Endothelial cell of umbilical vein (primary cell): ENCODE measurements at regions of chr9 and their contacts with region 1.

Region 1: DNA sequence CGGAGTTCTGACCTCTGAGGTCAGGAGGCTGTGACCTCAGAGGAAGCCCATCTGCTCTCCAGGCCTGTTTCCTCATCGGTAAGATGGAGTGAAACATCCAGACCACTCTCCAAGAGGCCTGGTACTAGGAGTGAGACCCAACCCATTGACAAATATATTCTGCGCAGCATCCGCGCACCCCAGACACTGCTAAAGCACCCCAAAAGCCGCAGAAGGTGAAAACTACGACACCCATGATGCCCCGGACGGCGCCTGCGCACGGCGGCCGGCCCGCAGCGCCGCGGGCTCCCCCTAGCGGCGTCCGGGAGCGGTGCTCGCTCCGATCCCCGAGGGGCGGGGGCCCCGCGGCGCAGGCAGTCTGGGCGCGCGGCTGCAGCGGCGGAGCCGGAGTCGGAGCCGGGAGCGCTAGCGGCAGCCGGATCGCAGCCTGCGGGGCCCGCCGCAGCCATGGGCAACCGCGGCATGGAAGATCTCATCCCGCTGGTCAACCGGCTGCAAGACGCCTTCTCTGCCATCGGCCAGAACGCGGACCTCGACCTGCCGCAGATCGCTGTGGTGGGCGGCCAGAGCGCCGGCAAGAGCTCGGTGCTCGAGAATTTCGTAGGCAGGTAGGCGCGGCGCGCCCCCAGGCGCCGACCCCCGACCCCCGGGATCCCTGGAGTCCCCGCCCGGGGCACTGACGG is at the start of gene DNM1:
- DNase-seq: peak; percentile 51
- H3K4me3 ChIP-seq: peak within 1 kb of the TSS; percentile 24 to 39 (median 32)
- H3K27ac ChIP-seq: no peak within 1 kb of the TSS
- H3K4me1 ChIP-seq: peaks cover 10% of the 10 kb centered on the region
- H3K27me3 ChIP-seq: peaks cover 9 to 10% of the 10 kb centered on the region in 2 experiments
- CTCF ChIP-seq: peak; percentile 74 to 99
- POLR2A ChIP-seq: no peak
- total RNA-seq, gene DNM1: 2.9 and 7.9 TPM in 2 replicates

Region 2: DNA sequence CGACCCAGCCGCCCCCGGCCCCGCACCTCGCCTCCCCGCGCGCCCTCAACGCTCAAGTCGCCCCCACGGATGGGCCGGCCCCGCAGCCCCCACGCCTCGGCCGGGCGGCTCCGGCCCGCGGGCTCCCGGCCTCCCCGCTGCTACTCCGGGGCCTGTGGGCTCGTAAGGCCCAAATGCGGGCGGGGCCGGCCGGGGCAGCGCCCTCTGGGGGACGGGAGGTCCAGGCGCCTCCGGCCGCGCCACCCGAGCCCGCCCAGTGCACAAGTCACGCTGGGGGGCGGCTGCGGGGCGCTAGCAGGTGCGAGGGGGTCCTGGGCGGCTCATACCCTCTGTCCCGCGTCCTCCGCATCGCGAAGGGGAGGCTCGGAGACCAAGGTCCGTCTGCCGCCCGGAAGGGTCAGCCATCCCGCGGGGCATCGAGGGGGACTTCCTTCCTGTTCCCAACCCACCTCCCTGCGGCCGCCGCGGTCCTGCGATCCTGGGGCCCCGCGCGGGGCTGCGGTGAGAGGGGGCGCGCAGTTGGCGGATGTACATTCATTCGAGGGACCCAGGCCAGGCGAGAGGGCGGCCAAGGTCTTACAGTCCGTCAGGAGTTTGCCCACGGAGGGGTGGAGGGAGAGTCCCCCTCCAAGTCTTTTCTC is 11.6 kb before region 1 on chr9 and contains the start of gene CIZ1:
- CTCF ChIA-PET with region 1: interaction called, 14 read pairs
- POLR2A ChIA-PET with region 1: no interaction called
- dilution Hi-C with region 1: no loop called
- intact Hi-C with region 1: loop called (anchors 1 kb)
- DNase-seq: peak; percentile 76
- H3K4me3 ChIP-seq: peak within 1 kb of the TSS; percentile 70 to 89 (median 76)
- H3K27ac ChIP-seq: peak within 1 kb of the TSS; percentile 37
- H3K4me1 ChIP-seq: peaks cover 11% of the 10 kb centered on the region
- H3K27me3 ChIP-seq: no peaks in the 10 kb centered on the region
- CTCF ChIP-seq: peak; percentile 74 to 86
- POLR2A ChIP-seq: peak; percentile 49
- total RNA-seq, gene CIZ1: 143 and 150 TPM in 2 replicates

Region 3: GRCh38 chr9:128218518-128219389 is 15.6 kb after region 1 on chr9:
- CTCF ChIA-PET with region 1: interaction called, 10 read pairs
- POLR2A ChIA-PET with region 1: interaction called, 3 read pairs
- dilution Hi-C with region 1: no loop called
- intact Hi-C with region 1: loop called (anchors 2 kb)
- DNase-seq: peak; percentile 90
- H3K4me3 ChIP-seq: peak overlapping the region in 1 of 3 experiments; percentile 8
- H3K27ac ChIP-seq: no peak overlapping the region
- H3K4me1 ChIP-seq: peaks cover 3% of the 10 kb centered on the region
- H3K27me3 ChIP-seq: peaks cover 0 to under 1% of the 10 kb centered on the region in 2 experiments
- CTCF ChIP-seq: peak in 1 of 2 donors; percentile 1
- POLR2A ChIP-seq: no peak

Region 4: DNA sequence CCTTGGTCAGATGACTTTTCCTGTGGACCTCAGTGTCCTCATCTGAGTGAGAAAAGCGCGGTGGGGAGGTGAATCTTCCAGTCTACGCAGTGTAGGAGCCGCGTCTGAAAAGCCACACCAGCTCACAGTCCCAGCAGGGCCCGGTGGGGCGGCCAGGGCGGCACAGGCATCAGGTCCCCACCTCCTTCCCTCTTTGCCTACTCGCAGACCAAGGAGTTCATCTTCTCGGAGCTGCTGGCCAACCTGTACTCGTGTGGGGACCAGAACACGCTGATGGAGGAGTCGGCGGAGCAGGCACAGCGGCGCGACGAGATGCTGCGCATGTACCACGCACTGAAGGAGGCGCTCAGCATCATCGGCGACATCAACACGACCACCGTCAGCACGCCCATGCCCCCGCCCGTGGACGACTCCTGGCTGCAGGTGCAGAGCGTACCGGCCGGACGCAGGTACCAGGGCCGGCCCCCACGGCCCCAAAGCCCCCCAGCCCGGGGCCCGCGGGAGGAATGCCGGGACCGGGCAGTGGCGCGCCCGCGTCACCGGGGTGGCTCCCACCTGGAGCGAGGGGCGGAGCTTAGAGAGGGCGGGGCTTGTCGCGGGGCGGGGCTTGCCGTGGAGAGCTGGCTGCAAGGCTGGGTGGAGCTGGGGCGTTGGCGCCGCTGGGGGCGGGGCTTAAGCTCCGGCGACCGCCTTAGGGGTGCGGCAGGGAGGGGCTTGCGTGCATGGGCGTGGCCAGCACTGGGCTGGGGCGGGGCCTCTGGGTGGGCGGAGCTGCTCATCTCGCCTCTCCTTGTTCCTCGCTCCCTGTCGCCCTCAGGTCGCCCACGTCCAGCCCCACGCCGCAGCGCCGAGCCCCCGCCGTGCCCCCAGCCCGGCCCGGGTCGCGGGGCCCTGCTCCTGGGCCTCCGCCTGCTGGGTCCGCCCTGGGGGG is 47.0 kb after region 1 on chr9:
- CTCF ChIA-PET with region 1: interaction called, 6 read pairs
- POLR2A ChIA-PET with region 1: no interaction called
- dilution Hi-C with region 1: no loop called
- intact Hi-C with region 1: loop called (anchors 2 kb)
- DNase-seq: peak; percentile 82
- H3K4me3 ChIP-seq: peak overlapping the region; percentile 34 to 52 (median 36)
- H3K27ac ChIP-seq: no peak overlapping the region
- H3K4me1 ChIP-seq: peaks cover 28% of the 10 kb centered on the region
- H3K27me3 ChIP-seq: no peaks in the 10 kb centered on the region
- CTCF ChIP-seq: no peak
- POLR2A ChIP-seq: no peak

Region 5: DNA sequence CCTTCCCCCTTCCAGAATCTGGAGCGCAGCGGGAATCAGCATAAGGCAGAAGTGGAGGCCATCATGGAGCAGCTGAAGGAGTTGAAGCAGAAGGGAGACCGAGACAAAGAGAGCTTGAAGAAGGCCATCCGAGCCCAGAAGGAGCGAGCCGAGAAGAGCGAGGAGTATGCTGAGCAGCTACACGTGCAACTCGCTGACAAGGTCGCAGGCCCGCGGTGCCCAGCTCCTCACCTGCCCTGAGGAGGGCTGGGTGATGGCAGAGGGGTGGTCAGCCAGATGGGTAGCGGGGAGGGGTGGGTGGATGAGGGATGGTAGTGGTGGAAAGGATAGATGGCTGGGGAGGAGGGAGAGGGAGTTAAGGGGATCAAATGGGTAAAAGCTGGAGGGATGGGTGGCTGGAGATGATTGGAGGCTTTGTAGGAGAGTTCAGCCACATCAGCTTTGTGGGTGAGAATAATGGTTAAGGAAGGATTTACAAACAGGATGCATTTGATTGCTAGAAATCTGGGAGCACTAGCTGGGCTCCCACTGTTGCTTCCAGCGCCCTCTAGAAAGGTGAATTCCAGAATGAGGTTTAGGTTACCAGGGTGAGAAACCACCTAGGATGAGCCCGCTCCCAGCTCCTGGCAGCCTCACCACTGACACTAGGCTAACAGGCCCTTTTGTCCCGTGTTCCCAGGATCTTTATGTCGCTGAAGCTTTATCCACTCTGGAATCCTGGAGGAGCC is 281.7 kb after region 1 on chr9:
- CTCF ChIA-PET with region 1: no interaction called
- POLR2A ChIA-PET with region 1: no interaction called
- dilution Hi-C with region 1: no loop called
- intact Hi-C with region 1: no loop called
- DNase-seq: no peak
- H3K4me3 ChIP-seq: no peak overlapping the region
- H3K27ac ChIP-seq: no peak overlapping the region
- H3K4me1 ChIP-seq: no peaks in the 10 kb centered on the region
- H3K27me3 ChIP-seq: no peaks in the 10 kb centered on the region
- CTCF ChIP-seq: no peak
- POLR2A ChIP-seq: no peak